CD4-positive, alpha-beta T cell (primary cell): ENCODE measurements at regions of chr1 and their contacts with region 1.

Region 1: DNA sequence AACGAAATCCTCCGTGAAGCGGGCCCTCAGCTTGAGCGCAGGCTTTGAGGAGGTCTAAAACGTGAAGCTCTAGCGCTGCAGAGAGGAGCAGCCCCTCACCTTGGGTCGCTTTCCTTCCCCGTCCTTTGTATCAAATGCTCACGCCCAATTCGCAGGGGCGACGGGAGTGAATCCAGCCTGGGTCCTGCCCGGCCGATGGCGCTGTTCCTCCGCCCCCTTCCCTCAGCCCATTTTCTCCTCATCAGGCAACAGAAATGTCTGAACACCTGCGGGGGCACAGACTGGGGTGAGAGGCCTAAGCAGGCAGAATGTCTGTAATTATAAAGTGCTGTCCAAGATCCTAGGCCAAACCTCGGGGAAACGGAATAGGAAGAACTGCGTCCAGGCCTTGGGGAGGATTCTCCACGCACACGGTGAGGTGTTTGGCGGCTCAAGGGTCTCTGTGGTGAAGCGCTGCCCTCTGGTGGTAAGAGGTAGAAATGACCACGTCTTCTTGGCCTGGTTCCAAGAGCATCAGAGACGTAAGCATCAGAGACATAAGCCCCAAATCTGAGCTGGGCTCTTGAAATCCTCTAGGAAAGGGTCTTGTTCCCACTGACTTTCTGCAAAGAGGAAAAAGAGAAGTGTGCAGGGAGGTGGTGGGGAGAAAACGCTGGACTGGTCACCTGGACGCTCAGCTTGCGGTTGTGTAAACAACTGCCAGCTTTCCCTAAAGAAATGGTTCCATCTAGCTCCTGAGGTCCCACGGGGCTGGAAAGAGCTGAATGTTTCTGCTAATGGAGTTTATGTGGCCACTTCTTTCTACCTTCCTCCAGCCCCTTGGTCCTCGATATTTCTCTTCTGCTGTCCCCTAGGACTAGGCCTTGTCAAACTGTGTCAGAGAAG is 92.1 kb upstream of the CD53 start:
- DNase-seq: peak; percentile 55 to 92 (median 70)
- ATAC-seq: peak; percentile 75
- H3K4me3 ChIP-seq: no peak overlapping the region
- H3K4me3 Mint-ChIP-seq: no peak overlapping the region
- H3K27ac ChIP-seq: no peak overlapping the region
- H3K27ac Mint-ChIP-seq: no peak overlapping the region
- H3K4me1 ChIP-seq: peaks cover 41% of the 10 kb centered on the region
- H3K4me1 Mint-ChIP-seq: peaks cover 56% of the 10 kb centered on the region
- H3K27me3 ChIP-seq: no peaks in the 10 kb centered on the region
- H3K27me3 Mint-ChIP-seq: no peaks in the 10 kb centered on the region
- CTCF ChIP-seq: peak; percentile 70

Region 2: DNA sequence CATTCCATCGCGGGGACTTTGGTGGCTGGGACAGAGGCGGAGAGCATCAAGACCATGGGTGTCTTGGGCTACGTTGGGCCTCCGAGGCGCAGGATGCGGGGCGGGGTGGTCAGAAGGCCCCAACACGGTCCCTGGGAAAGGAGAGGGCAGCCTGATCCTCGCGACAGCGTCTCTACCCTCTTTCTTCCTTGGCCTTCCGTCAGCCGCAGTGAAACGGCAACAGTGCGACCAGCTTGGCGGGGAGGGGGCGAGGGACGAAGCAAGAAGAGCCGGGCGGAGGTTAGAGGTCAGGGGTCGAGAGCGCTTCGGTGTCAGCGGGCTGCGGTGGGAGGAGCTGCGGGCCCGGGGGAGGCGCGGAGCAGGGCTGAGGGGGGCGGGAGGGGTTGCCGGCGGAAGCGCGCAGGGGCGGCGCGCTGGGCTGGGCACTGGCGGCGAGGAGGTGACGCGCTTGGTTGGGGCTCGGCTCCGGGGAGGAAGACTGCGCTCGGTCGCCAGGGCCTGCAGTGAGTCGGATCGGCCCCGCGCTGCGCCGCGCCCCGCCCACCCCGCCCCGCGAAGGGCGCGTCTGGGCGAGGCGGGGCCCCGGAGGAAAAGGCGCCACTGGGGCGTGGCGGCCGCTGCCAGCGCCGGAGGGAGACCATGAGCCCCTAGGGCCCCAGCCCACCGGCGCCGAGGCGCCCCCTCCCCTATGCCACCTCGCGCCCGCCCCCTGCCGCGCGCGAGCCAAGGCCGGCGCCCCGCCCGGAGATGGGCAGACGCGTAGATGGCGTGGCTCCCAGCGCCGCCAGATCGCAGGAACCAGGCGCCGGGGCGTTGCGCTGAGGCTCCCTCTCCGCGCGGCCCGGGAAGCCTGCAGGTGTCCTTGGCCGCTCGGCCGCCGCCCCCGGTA is 570.9 kb before region 1 on chr1 and contains the start of gene KCNC4:
- CTCF ChIA-PET with region 1: no interaction called
- POLR2A ChIA-PET with region 1: no interaction called
- intact Hi-C with region 1: loop called in 1 of 2 experiments (anchors 5 kb)
- DNase-seq: peak; percentile 86 to 98 (median 92)
- ATAC-seq: peak; percentile 85
- H3K4me3 ChIP-seq: peak within 1 kb of the TSS; percentile 70
- H3K4me3 Mint-ChIP-seq: peak within 1 kb of the TSS; percentile 94
- H3K27ac ChIP-seq: peak within 1 kb of the TSS; percentile 84 to 86
- H3K27ac Mint-ChIP-seq: peak within 1 kb of the TSS; percentile 94
- H3K4me1 ChIP-seq: peaks cover 50% of the 10 kb centered on the region
- H3K4me1 Mint-ChIP-seq: peaks cover 66% of the 10 kb centered on the region
- H3K27me3 ChIP-seq: no peaks in the 10 kb centered on the region
- H3K27me3 Mint-ChIP-seq: no peaks in the 10 kb centered on the region
- CTCF ChIP-seq: no peak
- total RNA-seq, gene KCNC4: 16.5 to 17.7 TPM

Region 3: GRCh38 chr1:110554871-110555801 is 225.7 kb before region 1 on chr1:
- CTCF ChIA-PET with region 1: interaction called, 15 read pairs
- POLR2A ChIA-PET with region 1: no interaction called
- intact Hi-C with region 1: loop called (anchors 1 to 2 kb)
- DNase-seq: peak; percentile 27 to 77 (median 46)
- ATAC-seq: peak; percentile 94
- H3K4me3 ChIP-seq: no peak overlapping the region
- H3K4me3 Mint-ChIP-seq: no peak overlapping the region
- H3K27ac ChIP-seq: no peak overlapping the region
- H3K27ac Mint-ChIP-seq: no peak overlapping the region
- H3K4me1 ChIP-seq: peaks cover 11% of the 10 kb centered on the region
- H3K4me1 Mint-ChIP-seq: no peaks in the 10 kb centered on the region
- H3K27me3 ChIP-seq: peaks cover 34 to 62% of the 10 kb centered on the region in 2 experiments
- H3K27me3 Mint-ChIP-seq: peaks cover 72% of the 10 kb centered on the region
- CTCF ChIP-seq: peak; percentile 77

Region 4: GRCh38 chr1:110798691-110799256 is 17.9 kb after region 1 on chr1:
- CTCF ChIA-PET with region 1: interaction called, 4 read pairs
- POLR2A ChIA-PET with region 1: no interaction called
- intact Hi-C with region 1: loop called in 1 of 2 experiments (anchors 2 kb)
- DNase-seq: no peak
- ATAC-seq: no peak
- H3K4me3 ChIP-seq: no peak overlapping the region
- H3K4me3 Mint-ChIP-seq: no peak overlapping the region
- H3K27ac ChIP-seq: no peak overlapping the region
- H3K27ac Mint-ChIP-seq: no peak overlapping the region
- H3K4me1 ChIP-seq: no peaks in the 10 kb centered on the region
- H3K4me1 Mint-ChIP-seq: no peaks in the 10 kb centered on the region
- H3K27me3 ChIP-seq: no peaks in the 10 kb centered on the region
- H3K27me3 Mint-ChIP-seq: no peaks in the 10 kb centered on the region
- CTCF ChIP-seq: no peak

Region 5: GRCh38 chr1:110963691-110964399 is 183.0 kb after region 1 on chr1 and contains the start of gene LRIF1:
- CTCF ChIA-PET with region 1: interaction called, 3 read pairs
- POLR2A ChIA-PET with region 1: interaction called, 40 read pairs
- intact Hi-C with region 1: loop called (anchors 2 to 10 kb)
- DNase-seq: peak; percentile 99 to 100 (median 100)
- ATAC-seq: peak; percentile 95
- H3K4me3 ChIP-seq: peak within 1 kb of the TSS; percentile 76
- H3K4me3 Mint-ChIP-seq: peak within 1 kb of the TSS; percentile 90
- H3K27ac ChIP-seq: peak within 1 kb of the TSS; percentile 94 to 100
- H3K27ac Mint-ChIP-seq: peak within 1 kb of the TSS; percentile 93
- H3K4me1 ChIP-seq: peaks cover 12% of the 10 kb centered on the region
- H3K4me1 Mint-ChIP-seq: peaks cover 36% of the 10 kb centered on the region
- H3K27me3 ChIP-seq: peaks cover 4 to 9% of the 10 kb centered on the region in 2 experiments
- H3K27me3 Mint-ChIP-seq: peaks cover 15% of the 10 kb centered on the region
- CTCF ChIP-seq: no peak
- total RNA-seq, gene LRIF1: 1.6 to 1.8 TPM

Region 6: DNA sequence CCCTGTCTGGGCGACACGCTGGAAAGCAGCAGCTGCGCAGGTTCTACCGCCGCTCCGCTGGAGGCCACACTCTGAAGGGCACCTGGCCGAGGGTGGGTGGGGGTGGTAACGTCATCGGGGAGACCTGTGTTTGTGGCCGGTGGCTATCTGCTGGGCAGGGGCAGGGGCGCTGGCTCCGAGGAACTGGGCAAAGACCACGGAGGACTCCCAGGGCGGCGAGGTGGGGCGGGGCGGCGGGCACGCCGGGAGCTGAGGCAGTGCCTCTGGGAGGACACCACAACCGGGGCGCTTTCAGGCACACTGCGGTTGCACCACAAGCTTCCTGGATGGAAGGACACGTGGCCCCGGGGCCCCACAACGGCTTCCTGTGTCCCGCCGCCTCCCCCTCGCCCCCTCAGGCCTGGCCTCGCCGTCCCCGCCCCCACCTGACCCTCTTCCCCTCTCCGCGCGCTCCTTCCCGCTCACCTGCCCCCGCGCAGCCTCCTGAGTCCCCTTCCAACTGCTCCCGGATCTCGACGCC is 422.9 kb after region 1 on chr1:
- CTCF ChIA-PET with region 1: no interaction called
- POLR2A ChIA-PET with region 1: no interaction called
- intact Hi-C with region 1: loop called in 1 of 2 experiments (anchors 10 kb)
- DNase-seq: peak; percentile 52 to 93 (median 84)
- ATAC-seq: peak; percentile 39
- H3K4me3 ChIP-seq: peak overlapping the region; percentile 79
- H3K4me3 Mint-ChIP-seq: peak overlapping the region; percentile 99
- H3K27ac ChIP-seq: peak overlapping the region; percentile 70 to 97
- H3K27ac Mint-ChIP-seq: peak overlapping the region; percentile 90
- H3K4me1 ChIP-seq: peaks cover 50% of the 10 kb centered on the region
- H3K4me1 Mint-ChIP-seq: peaks cover 83% of the 10 kb centered on the region
- H3K27me3 ChIP-seq: no peaks in the 10 kb centered on the region
- H3K27me3 Mint-ChIP-seq: no peaks in the 10 kb centered on the region
- CTCF ChIP-seq: no peak